ENCODE measurements at regions of chr10 and their contacts with region 1.

Region 1: DNA sequence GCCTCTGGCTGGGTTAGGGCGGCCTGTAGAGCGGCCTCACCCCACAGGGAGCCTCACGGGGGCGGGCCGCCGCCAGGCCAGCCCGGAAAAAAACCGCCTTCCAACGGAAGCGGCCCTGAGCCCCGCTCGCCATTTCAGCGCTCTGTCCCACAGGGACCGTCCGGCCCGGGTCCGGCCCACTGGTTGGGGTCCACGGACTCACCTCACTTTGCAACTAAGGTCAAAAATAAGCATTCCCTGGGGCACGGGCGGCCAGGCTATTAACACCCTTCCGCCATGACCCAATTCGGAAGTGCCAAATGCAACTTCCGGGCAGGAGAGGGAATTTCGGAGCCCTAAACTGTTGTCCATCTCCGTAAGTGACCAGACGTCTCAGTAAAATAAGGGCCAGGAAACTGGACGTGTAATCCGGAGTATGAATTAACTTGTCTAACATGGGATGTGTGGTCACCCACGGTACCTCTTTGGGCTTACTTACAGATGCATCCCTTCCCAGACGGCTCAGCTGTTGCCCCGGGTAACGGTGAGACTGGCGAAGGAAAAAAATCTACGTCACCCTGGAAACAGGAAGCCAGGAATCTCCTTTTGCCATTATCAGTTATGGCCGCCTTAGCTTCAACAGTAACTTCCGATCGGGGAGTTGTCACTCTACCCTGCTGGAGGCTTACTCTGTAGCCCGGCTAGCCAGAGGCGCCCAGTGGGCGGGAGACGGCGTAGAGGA is at the start of gene BBIP1:
- DNase-seq: no peak
- H3K4me3 Mint-ChIP-seq: peak within 1 kb of the TSS; percentile 97
- H3K27ac Mint-ChIP-seq: peak within 1 kb of the TSS; percentile 97
- H3K4me1 Mint-ChIP-seq: peaks cover 47% of the 10 kb centered on the region
- H3K27me3 Mint-ChIP-seq: no peaks in the 10 kb centered on the region
- total RNA-seq, gene BBIP1: 31.0 and 36.3 TPM in 2 replicates

Region 2: GRCh38 chr10:110076559-110077318 is 842.1 kb before region 1 on chr10:
- intact Hi-C with region 1: loop called (anchors 10 kb)
- DNase-seq: no peak
- H3K4me3 Mint-ChIP-seq: peak overlapping the region; percentile 82
- H3K27ac Mint-ChIP-seq: peak overlapping the region; percentile 93
- H3K4me1 Mint-ChIP-seq: peaks cover 89% of the 10 kb centered on the region
- H3K27me3 Mint-ChIP-seq: no peaks in the 10 kb centered on the region

Region 3: GRCh38 chr10:110304780-110305421 is 613.9 kb before region 1 on chr10 and contains the start of gene SMNDC1:
- intact Hi-C with region 1: loop called (anchors 1 kb)
- DNase-seq: peak; percentile 96
- H3K4me3 Mint-ChIP-seq: peak within 1 kb of the TSS; percentile 97
- H3K27ac Mint-ChIP-seq: peak within 1 kb of the TSS; percentile 96
- H3K4me1 Mint-ChIP-seq: peaks cover 48% of the 10 kb centered on the region
- H3K27me3 Mint-ChIP-seq: no peaks in the 10 kb centered on the region
- total RNA-seq, gene SMNDC1: 47.8 and 48.0 TPM in 2 replicates

Region 4: GRCh38 chr10:110617425-110618229 is 301.2 kb before region 1 on chr10:
- intact Hi-C with region 1: loop called (anchors 1 kb)
- DNase-seq: no peak
- H3K4me3 Mint-ChIP-seq: peak overlapping the region; percentile 47
- H3K27ac Mint-ChIP-seq: peak overlapping the region; percentile 93
- H3K4me1 Mint-ChIP-seq: peaks cover 60% of the 10 kb centered on the region
- H3K27me3 Mint-ChIP-seq: peaks cover 7% of the 10 kb centered on the region

Region 5: GRCh38 chr10:110864662-110865140 is 54.1 kb before region 1 on chr10:
- intact Hi-C with region 1: loop called (anchors 1 kb)
- DNase-seq: peak; percentile 69
- H3K4me3 Mint-ChIP-seq: peak overlapping the region; percentile 75
- H3K27ac Mint-ChIP-seq: peak overlapping the region; percentile 95
- H3K4me1 Mint-ChIP-seq: peaks cover 96% of the 10 kb centered on the region
- H3K27me3 Mint-ChIP-seq: no peaks in the 10 kb centered on the region

Region 6: DNA sequence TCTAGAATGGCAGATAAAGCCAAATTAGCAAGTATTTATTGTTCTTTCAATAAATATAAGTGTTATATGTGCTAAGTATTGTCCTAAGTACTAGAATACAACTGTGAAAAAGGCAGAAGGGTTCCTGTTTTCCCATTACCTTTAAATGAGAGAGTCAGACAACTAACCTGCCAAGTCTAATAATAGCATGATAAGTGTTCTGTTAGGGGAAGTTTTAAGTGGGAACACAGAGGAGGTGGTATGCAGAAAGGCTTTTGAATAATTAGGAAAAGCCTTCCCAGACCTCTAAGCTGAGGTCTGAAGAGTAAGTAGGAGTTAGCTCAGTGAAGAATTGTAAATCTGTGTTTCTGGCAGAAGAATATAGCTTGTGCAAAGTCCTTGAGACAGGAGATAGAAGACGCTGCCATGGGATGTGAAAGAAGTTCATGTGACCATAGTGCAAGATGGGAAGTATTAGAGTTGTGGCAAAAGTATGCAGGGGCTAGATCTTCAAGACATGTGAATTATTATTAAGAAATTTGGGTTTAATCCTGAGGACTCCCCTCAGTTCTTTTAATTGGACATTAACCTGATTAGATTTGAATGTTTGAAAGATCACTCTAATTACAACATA is 13.1 kb after region 1 on chr10:
- intact Hi-C with region 1: no loop called
- DNase-seq: no peak
- H3K4me3 Mint-ChIP-seq: no peak overlapping the region
- H3K27ac Mint-ChIP-seq: no peak overlapping the region
- H3K4me1 Mint-ChIP-seq: peaks cover 11% of the 10 kb centered on the region
- H3K27me3 Mint-ChIP-seq: no peaks in the 10 kb centered on the region

Region 7: DNA sequence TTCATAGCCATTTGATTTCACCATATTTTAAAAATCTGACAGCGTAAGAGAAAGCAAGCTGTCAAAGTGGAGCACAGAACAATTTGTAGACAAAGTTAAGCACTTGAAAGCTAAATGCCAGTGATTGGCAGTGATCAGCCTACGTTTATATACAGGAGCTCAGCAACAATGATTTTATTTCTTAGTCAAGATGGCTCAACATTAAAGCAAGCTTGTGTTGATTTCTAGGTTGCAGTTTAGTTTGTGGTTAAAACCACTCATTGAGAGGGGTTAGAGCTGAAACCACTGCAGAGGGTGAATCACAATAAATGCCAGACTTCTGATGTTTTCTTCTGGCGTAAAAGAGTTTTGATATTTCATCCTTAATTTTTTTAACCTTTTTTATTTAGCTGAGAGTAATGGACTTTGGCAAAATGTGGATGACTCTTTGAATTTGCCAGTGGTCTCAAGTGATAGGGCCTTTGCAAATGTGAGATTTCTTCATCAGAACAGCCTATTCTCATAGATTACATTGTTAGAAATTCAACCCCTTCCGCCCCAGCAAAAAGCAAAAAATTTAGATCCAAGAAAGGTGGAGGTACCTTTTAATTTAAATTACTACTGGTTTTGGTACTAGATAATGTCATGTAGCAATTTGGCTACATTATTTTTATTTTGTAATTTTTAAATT is 74.4 kb after region 1 on chr10:
- intact Hi-C with region 1: loop called (anchors 1 kb)
- DNase-seq: peak; percentile 21
- H3K4me3 Mint-ChIP-seq: peak overlapping the region; percentile 63
- H3K27ac Mint-ChIP-seq: no peak overlapping the region
- H3K4me1 Mint-ChIP-seq: peaks cover 43% of the 10 kb centered on the region
- H3K27me3 Mint-ChIP-seq: no peaks in the 10 kb centered on the region

Region 8: DNA sequence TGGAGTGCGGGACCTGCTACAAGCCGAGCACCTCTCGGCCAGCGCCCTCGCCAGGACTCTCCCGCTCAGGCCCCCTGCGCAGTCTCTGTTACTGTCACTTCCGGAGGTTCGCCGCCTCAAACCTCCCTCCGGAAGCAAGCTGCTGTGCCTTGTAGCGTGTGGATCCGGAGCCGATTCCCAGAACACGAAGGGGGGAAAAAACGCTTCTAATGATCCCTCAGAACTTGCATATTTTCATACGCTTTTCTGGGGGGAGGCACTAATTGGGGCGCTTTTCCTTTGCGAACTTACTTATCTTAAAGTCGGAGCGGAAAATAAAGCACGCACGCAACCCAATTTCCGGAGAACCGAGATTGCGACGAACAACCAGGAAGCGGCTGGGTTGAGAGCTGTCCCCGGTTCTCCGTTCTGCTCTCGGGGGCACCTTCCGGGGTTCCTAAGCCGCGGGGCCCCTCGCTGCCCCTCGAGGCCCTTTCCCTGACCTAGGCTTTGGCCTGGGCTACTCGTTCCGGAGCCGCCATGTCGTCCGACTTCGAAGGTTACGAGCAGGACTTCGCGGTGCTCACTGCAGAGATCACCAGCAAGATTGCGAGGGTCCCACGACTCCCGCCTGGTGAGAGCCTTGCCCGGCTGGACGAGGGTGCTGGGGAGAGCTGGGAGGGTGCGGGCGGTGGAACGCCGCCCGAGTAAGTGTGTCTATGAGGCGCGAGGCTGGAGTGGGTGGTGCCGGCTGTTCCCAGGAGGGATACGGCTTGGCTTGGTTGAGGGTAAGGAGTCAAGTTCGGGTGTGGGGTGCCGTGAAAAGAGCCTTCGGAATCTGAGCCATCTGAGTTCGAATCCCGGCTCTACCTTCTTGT is 1528.3 kb after region 1 on chr10 and contains the starts of genes VTI1A and ZDHHC6:
- intact Hi-C with region 1: loop called (anchors 10 kb)
- DNase-seq: peak; percentile 80
- H3K4me3 Mint-ChIP-seq: peak within 1 kb of the TSS; percentile 93
- H3K27ac Mint-ChIP-seq: peak within 1 kb of the TSS; percentile 93
- H3K4me1 Mint-ChIP-seq: peaks cover 47% of the 10 kb centered on the region
- H3K27me3 Mint-ChIP-seq: no peaks in the 10 kb centered on the region
- total RNA-seq, gene VTI1A: 39.4 and 39.9 TPM in 2 replicates
- total RNA-seq, gene ZDHHC6: 51.9 and 52.6 TPM in 2 replicates